ENCODE measurements at regions of chr11 and their contacts with region 1.

Region 1: DNA sequence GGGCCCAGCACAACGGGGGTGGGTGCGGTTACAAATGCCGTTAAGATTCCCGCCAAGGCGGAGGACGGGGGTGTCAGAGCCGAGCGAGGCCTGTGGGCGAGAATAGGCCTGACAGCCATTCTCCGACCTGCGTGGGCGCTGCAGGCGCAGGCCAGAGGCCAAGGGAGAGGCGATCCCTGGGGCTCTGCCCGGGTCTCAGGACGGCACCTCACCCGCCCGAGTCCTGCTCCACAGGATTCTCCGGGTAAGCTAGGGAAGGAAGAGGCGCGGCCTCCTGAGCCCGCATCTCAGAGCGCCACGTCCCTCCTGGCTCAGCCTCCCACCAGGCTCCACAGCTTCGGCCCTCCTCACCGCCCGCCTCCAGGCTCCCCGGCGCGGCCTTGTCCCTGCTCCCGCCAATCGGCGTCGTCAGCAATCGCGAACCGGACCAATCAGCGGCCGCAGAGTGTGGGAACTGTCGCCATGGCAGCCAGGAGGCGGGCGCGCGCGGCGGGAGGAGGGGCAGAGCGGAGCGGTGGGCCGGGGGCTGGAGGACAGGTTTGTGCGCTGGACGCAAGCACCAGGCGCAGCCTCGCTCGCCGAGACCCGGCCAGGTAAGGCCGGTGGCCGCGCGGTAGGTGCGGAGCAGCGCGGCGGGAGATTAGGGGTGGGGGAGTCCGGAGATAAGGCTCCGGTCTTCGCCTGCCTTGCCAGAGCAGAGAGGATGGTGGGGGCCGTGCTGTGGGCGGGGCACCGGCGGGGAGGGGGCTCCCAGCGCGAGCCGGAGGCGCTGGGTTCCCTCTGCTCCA is at the start of gene NUCB2:
- DNase-seq: peak; percentile 93 to 95 (median 93)
- H3K4me3 ChIP-seq: peak within 1 kb of the TSS; percentile 71 to 89
- H3K4me3 Mint-ChIP-seq: peak within 1 kb of the TSS; percentile 80 to 97 (median 88)
- H3K27ac ChIP-seq: peak within 1 kb of the TSS; percentile 82
- H3K27ac Mint-ChIP-seq: peak within 1 kb of the TSS; percentile 75 to 97 (median 95)
- H3K4me1 ChIP-seq: peaks cover 36% of the 10 kb centered on the region
- H3K4me1 Mint-ChIP-seq: peaks cover 18 to 45% (median 31%) of the 10 kb centered on the region in 4 donors
- H3K27me3 ChIP-seq: no peaks in the 10 kb centered on the region
- H3K27me3 Mint-ChIP-seq: no peaks in the 10 kb centered on the region
- total RNA-seq, gene NUCB2: 53.2 to 57.6 TPM

Region 2: DNA sequence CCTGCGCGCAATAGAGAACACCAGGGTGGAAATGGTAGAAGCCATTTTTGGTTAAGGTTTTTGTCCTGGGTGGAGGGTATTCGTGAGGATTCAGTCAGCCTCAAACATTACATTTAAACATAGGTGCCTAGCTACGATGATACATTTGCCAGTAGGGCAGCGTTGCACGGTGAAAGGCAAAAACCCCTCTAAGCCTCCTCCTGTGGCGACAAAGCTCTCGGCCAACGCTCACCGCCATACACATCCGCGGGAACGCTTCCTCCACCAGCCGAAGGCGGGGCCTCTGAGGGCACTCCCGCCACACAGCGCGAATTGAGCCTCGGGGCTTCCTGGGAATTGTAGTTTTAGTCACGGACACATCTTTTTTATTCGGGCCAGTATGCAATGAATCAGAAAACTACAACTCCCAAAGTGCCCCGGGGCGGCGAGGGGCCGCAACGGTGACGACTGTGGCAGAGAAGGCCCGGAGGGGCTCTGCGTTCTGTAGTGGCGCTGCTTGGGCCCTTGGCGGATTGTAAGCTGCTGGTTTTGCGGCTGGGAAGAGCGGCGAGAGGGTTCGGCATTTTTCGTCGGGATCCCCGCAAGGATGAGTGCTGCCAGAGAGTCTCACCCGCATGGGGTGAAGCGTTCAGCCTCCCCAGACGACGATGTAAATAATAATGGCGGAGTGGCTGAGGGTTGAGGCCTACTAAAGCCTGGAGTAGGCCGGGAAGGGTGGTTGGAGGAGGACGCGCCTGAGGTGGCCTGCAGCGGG is 538.1 kb before region 1 on chr11 and contains the start of gene C11orf58:
- CTCF ChIA-PET with region 1: no interaction called
- POLR2A ChIA-PET with region 1: no interaction called
- intact Hi-C with region 1: loop called (anchors 1 kb)
- DNase-seq: peak; percentile 97 to 98 (median 98)
- H3K4me3 ChIP-seq: peak within 1 kb of the TSS; percentile 70 to 98
- H3K4me3 Mint-ChIP-seq: peak within 1 kb of the TSS in 5 of 8 donors; percentile 58 to 84 (median 72)
- H3K27ac ChIP-seq: peak within 1 kb of the TSS; percentile 99
- H3K27ac Mint-ChIP-seq: peak within 1 kb of the TSS in 5 of 7 donors; percentile 86 to 94 (median 90)
- H3K4me1 ChIP-seq: peaks cover 41% of the 10 kb centered on the region
- H3K4me1 Mint-ChIP-seq: peaks cover 17 to 32% (median 23%) of the 10 kb centered on the region in 4 donors
- H3K27me3 ChIP-seq: no peaks in the 10 kb centered on the region
- H3K27me3 Mint-ChIP-seq: no peaks in the 10 kb centered on the region
- total RNA-seq, gene C11orf58: 145 to 148 TPM

Region 3: GRCh38 chr11:17098038-17098437 is 178.4 kb before region 1 on chr11:
- CTCF ChIA-PET with region 1: no interaction called
- POLR2A ChIA-PET with region 1: no interaction called
- intact Hi-C with region 1: no loop called
- DNase-seq: no peak
- H3K4me3 ChIP-seq: no peak overlapping the region
- H3K4me3 Mint-ChIP-seq: no peak overlapping the region
- H3K27ac ChIP-seq: no peak overlapping the region
- H3K27ac Mint-ChIP-seq: peak overlapping the region in 3 of 7 donors; percentile 2 to 38 (median 4)
- H3K4me1 ChIP-seq: no peaks in the 10 kb centered on the region
- H3K4me1 Mint-ChIP-seq: no peaks in the 10 kb centered on the region
- H3K27me3 ChIP-seq: no peaks in the 10 kb centered on the region
- H3K27me3 Mint-ChIP-seq: no peaks in the 10 kb centered on the region

Region 4: DNA sequence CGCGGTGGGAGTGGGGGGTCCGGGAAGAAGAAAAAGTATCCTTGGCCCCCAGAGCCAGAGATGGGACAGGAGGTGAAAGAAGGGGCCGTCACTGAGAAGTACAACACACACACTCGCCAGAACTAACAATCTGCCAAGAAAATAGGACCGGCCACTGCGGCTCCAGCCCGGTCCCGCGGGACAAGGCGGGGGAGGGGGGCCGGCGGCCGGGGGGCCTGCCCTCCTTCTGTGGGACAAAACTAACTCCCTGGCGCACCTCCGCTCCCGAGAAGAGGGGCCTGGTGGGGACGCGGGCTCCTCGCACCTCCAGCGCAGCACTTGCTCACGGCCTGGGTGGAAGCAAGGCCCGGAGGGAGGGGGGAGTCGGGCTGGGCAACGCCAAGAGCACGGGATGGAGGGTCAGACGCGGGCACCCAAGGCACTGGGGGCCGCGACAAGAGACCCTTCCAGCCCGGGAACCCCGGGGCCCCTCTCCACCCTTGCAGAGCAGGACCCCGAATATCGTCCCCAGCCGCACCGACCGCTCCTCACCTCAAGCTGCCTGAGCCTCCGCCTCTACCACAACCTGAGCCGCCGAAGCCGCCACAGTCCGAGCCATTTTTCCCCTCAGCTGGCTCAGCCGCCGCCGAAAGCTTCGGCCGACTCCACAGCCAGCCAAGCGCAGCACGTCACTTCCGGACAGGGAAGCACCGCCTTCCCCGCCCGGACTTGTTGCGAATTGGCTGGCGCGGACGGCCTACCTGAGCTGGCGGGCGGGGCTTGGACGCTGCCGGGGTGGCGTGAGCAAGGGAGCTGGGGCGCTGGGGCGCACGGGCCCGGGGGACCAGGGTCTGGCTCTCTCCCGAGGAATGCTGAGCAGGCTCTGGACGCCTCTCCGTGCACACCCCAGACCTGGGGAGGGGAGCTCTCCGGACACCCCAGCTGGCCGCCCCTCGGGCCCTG is 68.8 kb before region 1 on chr11 and contains the start of gene PIK3C2A:
- CTCF ChIA-PET with region 1: no interaction called
- POLR2A ChIA-PET with region 1: interaction called, 18 read pairs
- intact Hi-C with region 1: loop called (anchors 1 kb)
- DNase-seq: peak; percentile 90 to 94 (median 91)
- H3K4me3 ChIP-seq: peak within 1 kb of the TSS; percentile 70 to 79
- H3K4me3 Mint-ChIP-seq: peak within 1 kb of the TSS; percentile 95 to 100 (median 99)
- H3K27ac ChIP-seq: peak within 1 kb of the TSS; percentile 80
- H3K27ac Mint-ChIP-seq: peak within 1 kb of the TSS; percentile 75 to 100 (median 98)
- H3K4me1 ChIP-seq: peaks cover 25% of the 10 kb centered on the region
- H3K4me1 Mint-ChIP-seq: peaks cover 15 to 48% (median 35%) of the 10 kb centered on the region in 4 donors
- H3K27me3 ChIP-seq: no peaks in the 10 kb centered on the region
- H3K27me3 Mint-ChIP-seq: no peaks in the 10 kb centered on the region
- total RNA-seq, gene PIK3C2A: 32.0 to 40.4 TPM

Region 5: GRCh38 chr11:17287058-17287457 is 10.6 kb after region 1 on chr11:
- CTCF ChIA-PET with region 1: no interaction called
- POLR2A ChIA-PET with region 1: interaction called, 59 read pairs
- intact Hi-C with region 1: loop called (anchors 1 kb)
- DNase-seq: no peak
- H3K4me3 ChIP-seq: no peak overlapping the region
- H3K4me3 Mint-ChIP-seq: peak overlapping the region in 3 of 8 donors; percentile 10 to 40 (median 32)
- H3K27ac ChIP-seq: no peak overlapping the region
- H3K27ac Mint-ChIP-seq: peak overlapping the region in 5 of 7 donors; percentile 48 to 96 (median 84)
- H3K4me1 ChIP-seq: peaks cover 33% of the 10 kb centered on the region
- H3K4me1 Mint-ChIP-seq: peaks cover 24 to 55% (median 34%) of the 10 kb centered on the region in 4 donors
- H3K27me3 ChIP-seq: no peaks in the 10 kb centered on the region
- H3K27me3 Mint-ChIP-seq: no peaks in the 10 kb centered on the region

Region 6: DNA sequence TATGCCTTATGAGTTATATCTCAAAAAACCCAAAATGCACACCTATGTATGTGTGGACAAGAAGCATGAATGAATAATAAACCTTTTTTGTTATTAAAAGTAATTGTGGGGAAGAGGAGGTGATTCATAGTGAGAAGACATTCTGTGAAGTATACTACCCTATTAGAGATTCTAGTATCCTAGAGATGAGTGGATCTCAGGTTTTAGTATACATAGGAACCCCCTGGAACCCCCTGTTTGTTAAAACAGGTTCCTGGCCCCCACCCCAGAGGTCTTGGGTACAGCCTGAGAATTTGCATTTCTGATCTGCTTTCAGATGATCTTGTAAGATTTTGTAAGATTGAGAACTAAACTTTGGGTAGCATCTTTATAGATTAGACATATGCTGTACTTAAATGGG is 17.6 kb after region 1 on chr11:
- CTCF ChIA-PET with region 1: no interaction called
- POLR2A ChIA-PET with region 1: interaction called, 12 read pairs
- intact Hi-C with region 1: no loop called
- DNase-seq: no peak
- H3K4me3 ChIP-seq: no peak overlapping the region
- H3K4me3 Mint-ChIP-seq: no peak overlapping the region
- H3K27ac ChIP-seq: no peak overlapping the region
- H3K27ac Mint-ChIP-seq: peak overlapping the region in 2 of 7 donors; percentile 4 to 29
- H3K4me1 ChIP-seq: no peaks in the 10 kb centered on the region
- H3K4me1 Mint-ChIP-seq: peaks cover 12 to 22% (median 20%) of the 10 kb centered on the region in 4 donors
- H3K27me3 ChIP-seq: no peaks in the 10 kb centered on the region
- H3K27me3 Mint-ChIP-seq: no peaks in the 10 kb centered on the region

Region 7: GRCh38 chr11:17314232-17314547 is 37.8 kb after region 1 on chr11:
- CTCF ChIA-PET with region 1: no interaction called
- POLR2A ChIA-PET with region 1: no interaction called
- intact Hi-C with region 1: no loop called
- DNase-seq: no peak
- H3K4me3 ChIP-seq: no peak overlapping the region
- H3K4me3 Mint-ChIP-seq: no peak overlapping the region
- H3K27ac ChIP-seq: no peak overlapping the region
- H3K27ac Mint-ChIP-seq: no peak overlapping the region
- H3K4me1 ChIP-seq: no peaks in the 10 kb centered on the region
- H3K4me1 Mint-ChIP-seq: no peaks in the 10 kb centered on the region
- H3K27me3 ChIP-seq: no peaks in the 10 kb centered on the region
- H3K27me3 Mint-ChIP-seq: no peaks in the 10 kb centered on the region

Region 8: GRCh38 chr11:17354601-17354991 is 78.2 kb after region 1 on chr11:
- CTCF ChIA-PET with region 1: interaction called, 10 read pairs
- POLR2A ChIA-PET with region 1: interaction called, 30 read pairs
- intact Hi-C with region 1: loop called (anchors 1 kb)
- DNase-seq: peak; percentile 62 to 71 (median 65)
- H3K4me3 ChIP-seq: no peak overlapping the region
- H3K4me3 Mint-ChIP-seq: peak overlapping the region in 7 of 8 donors; percentile 74 to 98 (median 94)
- H3K27ac ChIP-seq: no peak overlapping the region
- H3K27ac Mint-ChIP-seq: peak overlapping the region in 5 of 7 donors; percentile 22 to 76 (median 64)
- H3K4me1 ChIP-seq: peaks cover 29% of the 10 kb centered on the region
- H3K4me1 Mint-ChIP-seq: peaks cover 17 to 44% (median 28%) of the 10 kb centered on the region in 4 donors
- H3K27me3 ChIP-seq: no peaks in the 10 kb centered on the region
- H3K27me3 Mint-ChIP-seq: peaks cover 0 to 1% of the 10 kb centered on the region in 2 donors

Region 9: GRCh38 chr11:17389211-17389956 is 113.0 kb after region 1 on chr11:
- CTCF ChIA-PET with region 1: interaction called, 3 read pairs
- POLR2A ChIA-PET with region 1: interaction called, 3 read pairs
- intact Hi-C with region 1: loop called (anchors 1 kb)
- DNase-seq: peak; percentile 76 to 82 (median 77)
- H3K4me3 ChIP-seq: peak overlapping the region; percentile 17 to 54
- H3K4me3 Mint-ChIP-seq: peak overlapping the region; percentile 77 to 90 (median 84)
- H3K27ac ChIP-seq: no peak overlapping the region
- H3K27ac Mint-ChIP-seq: peak overlapping the region in 6 of 7 donors; percentile 36 to 68 (median 39)
- H3K4me1 ChIP-seq: peaks cover 5% of the 10 kb centered on the region
- H3K4me1 Mint-ChIP-seq: peaks cover 0 to 8% (median 3%) of the 10 kb centered on the region in 4 donors
- H3K27me3 ChIP-seq: no peaks in the 10 kb centered on the region
- H3K27me3 Mint-ChIP-seq: peaks cover 0 to 2% of the 10 kb centered on the region in 2 donors

Region 10: GRCh38 chr11:17954395-17955252 is 678.2 kb after region 1 on chr11:
- CTCF ChIA-PET with region 1: no interaction called
- POLR2A ChIA-PET with region 1: no interaction called
- intact Hi-C with region 1: no loop called
- DNase-seq: no peak
- H3K4me3 ChIP-seq: no peak overlapping the region
- H3K4me3 Mint-ChIP-seq: no peak overlapping the region
- H3K27ac ChIP-seq: no peak overlapping the region
- H3K27ac Mint-ChIP-seq: no peak overlapping the region
- H3K4me1 ChIP-seq: no peaks in the 10 kb centered on the region
- H3K4me1 Mint-ChIP-seq: peaks cover 0 to 3% (median under 1%) of the 10 kb centered on the region in 4 donors
- H3K27me3 ChIP-seq: no peaks in the 10 kb centered on the region
- H3K27me3 Mint-ChIP-seq: no peaks in the 10 kb centered on the region

Measured in CD4-positive, alpha-beta memory T cell (primary cell).